Motor neuron (in vitro differentiated cells): ENCODE measurements at regions of chr12 and their contacts with region 1.

Region 1: GRCh38 chr12:132614861-132615578 is 3.6 kb upstream of the P2RX2 start:
- ATAC-seq: peak; percentile 82 to 95 (median 86)
- H3K4me3 ChIP-seq: no peak overlapping the region
- H3K27ac ChIP-seq: no peak overlapping the region
- H3K4me1 ChIP-seq: peaks cover 0 to 3% of the 10 kb centered on the region in 2 donors

Region 2: GRCh38 chr12:132153501-132154340 is 461.3 kb before region 1 on chr12:
- in situ Hi-C with region 1: loop called in 1 of 9 experiments (anchors 25 kb)
- ATAC-seq: peak; percentile 91 to 99 (median 96)
- H3K4me3 ChIP-seq: no peak overlapping the region
- H3K27ac ChIP-seq: no peak overlapping the region
- H3K4me1 ChIP-seq: peaks cover 0 to 3% of the 10 kb centered on the region in 2 donors

Region 3: GRCh38 chr12:132966676-132967415 is 351.8 kb after region 1 on chr12:
- in situ Hi-C with region 1: no loop called
- ATAC-seq: no peak
- H3K4me3 ChIP-seq: no peak overlapping the region
- H3K27ac ChIP-seq: no peak overlapping the region
- H3K4me1 ChIP-seq: no peaks in the 10 kb centered on the region